ENCODE measurements at regions of chr1 and their contacts with region 1.

Region 1: GRCh38 chr1:23947366-23947765 is 12.3 kb upstream of the PNRC2 start:
- DNase-seq: no peak
- H3K4me3 ChIP-seq: no peak overlapping the region
- H3K27ac ChIP-seq: no peak overlapping the region
- H3K4me1 ChIP-seq: peaks cover 16% of the 10 kb centered on the region
- CTCF ChIP-seq: no peak

Region 2: GRCh38 chr1:23930861-23931490 is 16.4 kb before region 1 on chr1:
- CTCF ChIA-PET with region 1: no interaction called
- POLR2A ChIA-PET with region 1: interaction called, 17 read pairs
- intact Hi-C with region 1: no loop called
- DNase-seq: peak; percentile 88
- H3K4me3 ChIP-seq: peak overlapping the region; percentile 62
- H3K27ac ChIP-seq: peak overlapping the region; percentile 93
- H3K4me1 ChIP-seq: peaks cover 75% of the 10 kb centered on the region
- CTCF ChIP-seq: no peak

Measured in OCI-LY7 (cell line).